Activated T-helper 1 cell treated with anti-CD3 and anti-CD28 coated beads, Interleukin-12 subunit alpha, Interleukin-12 subunit beta, Interleukin-2, Interleukin-4 antibody, amounts not matched to agents 30 ng/mL and 10 ng/mL and 1 ng/mL, durations not matched to agents 14 hours and 24 hours and 36 hours (primary cell): ENCODE measurements at regions of chr3 and their contacts with region 1.

Region 1: GRCh38 chr3:10248184-10249080 is at the start of gene TATDN2:
- DNase-seq: peak; percentile 93
- H3K4me3 Mint-ChIP-seq: peak within 1 kb of the TSS; percentile 97
- H3K27ac Mint-ChIP-seq: peak within 1 kb of the TSS; percentile 97
- H3K4me1 Mint-ChIP-seq: peaks cover 62% of the 10 kb centered on the region
- H3K27me3 Mint-ChIP-seq: no peaks in the 10 kb centered on the region
- total RNA-seq, gene TATDN2: 80.4 and 81.5 TPM in 2 replicates

Region 2: DNA sequence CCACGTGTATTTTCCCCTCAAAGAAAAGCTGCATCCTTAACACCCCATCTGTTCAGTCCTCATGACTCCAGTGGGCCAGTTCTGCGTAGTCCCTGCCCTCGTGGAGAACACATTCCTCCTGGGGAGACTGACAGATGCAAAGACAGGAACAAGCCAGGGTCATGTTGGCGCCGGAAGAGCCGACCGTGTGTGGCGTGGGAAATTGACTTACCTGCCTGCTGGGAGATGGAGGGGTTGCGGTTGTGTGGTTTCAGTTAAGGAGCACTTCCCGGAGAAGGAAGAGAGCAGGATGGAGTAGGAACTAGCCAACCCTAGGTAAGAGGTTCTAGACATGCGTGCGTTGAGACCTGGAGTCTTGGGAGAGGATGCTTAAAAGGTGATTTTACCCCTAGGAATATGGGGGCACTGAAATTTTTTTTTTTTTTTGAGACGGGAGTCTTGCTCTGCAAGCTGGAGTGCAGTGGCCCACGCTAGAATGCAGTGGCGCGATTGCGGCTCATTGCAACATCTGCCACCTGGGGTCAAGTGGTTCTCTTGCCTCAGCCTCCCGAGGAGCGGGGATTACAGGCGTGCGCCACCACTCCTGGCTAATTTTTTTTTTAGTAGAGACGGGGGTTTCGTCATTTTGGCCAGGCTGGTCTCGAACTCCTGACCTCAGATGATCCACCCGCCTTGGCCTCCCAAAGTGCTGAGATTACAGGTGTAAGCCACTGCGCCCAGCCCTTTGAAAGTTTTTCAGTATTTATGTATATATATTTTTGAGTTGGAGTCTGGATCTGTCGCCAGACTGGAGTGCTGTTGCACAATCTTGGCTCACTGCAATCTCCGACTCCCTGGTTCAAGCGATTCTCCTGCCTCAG is 105.5 kb before region 1 on chr3:
- intact Hi-C with region 1: loop called (anchors 1 kb)
- DNase-seq: no peak
- H3K4me3 Mint-ChIP-seq: peak overlapping the region; percentile 90
- H3K27ac Mint-ChIP-seq: peak overlapping the region; percentile 85
- H3K4me1 Mint-ChIP-seq: peaks cover 25% of the 10 kb centered on the region
- H3K27me3 Mint-ChIP-seq: no peaks in the 10 kb centered on the region

Region 3: DNA sequence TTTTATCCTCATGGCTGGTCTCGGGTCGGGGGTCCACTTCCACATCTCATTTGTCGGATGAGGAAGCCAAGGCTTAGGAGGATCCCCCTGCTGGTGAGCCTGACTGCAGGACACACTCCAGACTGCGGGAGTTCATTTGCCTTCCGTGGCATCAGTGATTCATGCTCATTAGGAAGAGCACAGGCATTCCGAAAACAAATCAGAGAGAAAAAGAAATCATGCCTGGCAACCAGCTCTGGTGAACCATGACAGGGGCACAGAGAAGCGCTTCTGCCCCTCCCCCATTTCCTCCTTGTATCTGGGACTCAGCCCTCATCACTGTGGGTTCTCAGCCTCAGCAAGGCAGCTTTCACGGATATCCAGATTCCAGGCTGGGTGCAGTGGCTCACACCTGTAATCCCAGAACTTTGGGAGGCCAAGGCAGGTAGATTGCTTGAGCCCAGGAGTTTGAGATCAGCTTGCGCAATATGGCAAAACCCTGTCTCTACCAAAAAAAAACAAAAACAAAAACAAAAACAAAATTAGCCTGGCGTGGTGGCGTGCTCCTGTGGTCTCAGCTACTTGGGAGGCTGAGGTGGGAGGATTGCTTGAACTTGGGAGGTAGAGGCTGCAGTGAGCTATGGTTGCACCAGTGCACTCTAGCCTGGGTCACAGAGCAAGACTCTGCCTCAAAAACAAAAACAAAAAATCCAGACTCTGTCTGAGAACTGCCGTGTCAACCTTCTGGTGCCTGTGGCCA is 55.3 kb before region 1 on chr3:
- intact Hi-C with region 1: loop called (anchors 1 kb)
- DNase-seq: no peak
- H3K4me3 Mint-ChIP-seq: peak overlapping the region; percentile 63
- H3K27ac Mint-ChIP-seq: peak overlapping the region; percentile 82
- H3K4me1 Mint-ChIP-seq: peaks cover 75% of the 10 kb centered on the region
- H3K27me3 Mint-ChIP-seq: no peaks in the 10 kb centered on the region

Region 4: GRCh38 chr3:10263646-10264363 is 15.4 kb after region 1 on chr3:
- intact Hi-C with region 1: loop called (anchors 1 kb)
- DNase-seq: peak; percentile 51
- H3K4me3 Mint-ChIP-seq: peak overlapping the region; percentile 79
- H3K27ac Mint-ChIP-seq: peak overlapping the region; percentile 80
- H3K4me1 Mint-ChIP-seq: peaks cover 74% of the 10 kb centered on the region
- H3K27me3 Mint-ChIP-seq: no peaks in the 10 kb centered on the region

Region 5: GRCh38 chr3:10283638-10284037 is 35.2 kb after region 1 on chr3:
- intact Hi-C with region 1: loop called (anchors 2 kb)
- DNase-seq: no peak
- H3K4me3 Mint-ChIP-seq: peak overlapping the region; percentile 50
- H3K27ac Mint-ChIP-seq: peak overlapping the region; percentile 82
- H3K4me1 Mint-ChIP-seq: peaks cover 71% of the 10 kb centered on the region
- H3K27me3 Mint-ChIP-seq: no peaks in the 10 kb centered on the region